ENCODE measurements at regions of chr3 and their contacts with region 1.

Region 1: DNA sequence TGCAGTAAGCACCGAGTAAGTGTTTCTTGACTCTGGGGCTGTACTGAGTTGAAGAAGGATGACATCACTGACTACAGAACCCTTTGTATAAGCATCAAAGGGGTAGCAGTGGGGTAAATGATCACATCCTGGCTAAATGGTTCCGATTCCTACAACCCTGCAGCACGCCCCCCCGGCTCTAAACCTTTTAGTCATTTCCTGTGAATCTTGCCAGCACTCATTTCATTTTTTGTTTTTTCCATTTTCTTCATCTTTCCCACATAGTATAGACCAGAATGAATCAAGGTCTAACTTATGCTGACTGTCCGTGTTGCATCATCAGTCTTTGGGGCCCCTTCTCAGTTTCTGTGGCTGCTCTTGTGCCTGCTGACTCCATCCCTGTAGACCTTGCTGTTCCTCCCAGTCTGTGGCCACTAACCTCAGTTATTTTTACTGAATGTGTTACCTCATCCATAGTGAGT is 383.1 kb upstream of the TPRG1 start:
- DNase-seq: peak; percentile 85
- H3K4me3 Mint-ChIP-seq: no peak overlapping the region
- H3K27ac Mint-ChIP-seq: no peak overlapping the region
- H3K4me1 Mint-ChIP-seq: peaks cover 2% of the 10 kb centered on the region
- H3K27me3 Mint-ChIP-seq: no peaks in the 10 kb centered on the region

Region 2: DNA sequence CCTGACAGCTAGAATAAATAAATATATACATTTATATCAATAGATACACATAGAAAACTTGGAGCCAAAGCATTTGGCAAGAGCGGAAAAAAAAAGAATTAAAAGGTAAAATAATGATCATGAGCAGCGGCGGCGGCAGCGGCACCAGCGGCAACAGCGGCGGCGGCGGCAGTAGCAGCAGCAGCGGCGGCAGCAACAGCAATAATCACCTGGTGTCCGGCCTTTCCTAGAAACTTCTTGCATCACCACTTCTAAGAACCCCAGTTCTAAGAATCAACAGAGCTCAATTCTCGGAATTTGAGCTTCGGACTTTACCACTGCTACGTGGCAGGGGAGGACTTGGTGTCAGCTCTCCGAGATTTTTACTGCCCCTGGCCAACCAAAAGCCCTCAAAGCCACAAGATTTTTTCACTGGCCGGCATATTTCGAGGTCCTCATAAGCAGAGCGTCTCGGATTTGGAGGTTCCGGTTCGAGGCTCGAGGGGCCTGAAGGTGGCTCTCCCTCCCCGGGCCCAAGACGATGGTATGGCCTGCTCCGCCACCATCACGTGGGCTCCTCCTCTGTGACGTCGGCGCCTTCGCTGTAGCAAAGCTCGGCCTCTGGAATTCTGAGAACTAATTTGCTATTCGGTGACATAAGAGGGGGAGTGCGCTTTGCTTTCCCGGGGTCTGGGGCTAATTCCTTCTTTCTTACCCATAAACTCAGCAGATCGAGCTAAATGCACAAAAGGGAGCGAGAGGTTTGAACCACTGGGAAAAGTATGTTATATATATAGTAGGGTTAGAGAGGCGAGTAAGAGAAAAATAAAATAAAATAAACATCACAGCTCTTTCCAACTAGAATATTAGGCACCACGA is 1043.2 kb before region 1 on chr3 and contains the start of gene BCL6:
- intact Hi-C with region 1: loop called (anchors 1 kb)
- DNase-seq: peak; percentile 97
- H3K4me3 Mint-ChIP-seq: peak within 1 kb of the TSS; percentile 98
- H3K27ac Mint-ChIP-seq: peak within 1 kb of the TSS; percentile 99
- H3K4me1 Mint-ChIP-seq: peaks cover 61% of the 10 kb centered on the region
- H3K27me3 Mint-ChIP-seq: no peaks in the 10 kb centered on the region
- total RNA-seq, gene BCL6: 41.7 and 51.7 TPM in 2 replicates

Region 3: GRCh38 chr3:188294823-188295487 is 493.7 kb before region 1 on chr3:
- intact Hi-C with region 1: loop called (anchors 5 kb)
- DNase-seq: no peak
- H3K4me3 Mint-ChIP-seq: no peak overlapping the region
- H3K27ac Mint-ChIP-seq: no peak overlapping the region
- H3K4me1 Mint-ChIP-seq: peaks cover 71% of the 10 kb centered on the region
- H3K27me3 Mint-ChIP-seq: no peaks in the 10 kb centered on the region

Region 4: DNA sequence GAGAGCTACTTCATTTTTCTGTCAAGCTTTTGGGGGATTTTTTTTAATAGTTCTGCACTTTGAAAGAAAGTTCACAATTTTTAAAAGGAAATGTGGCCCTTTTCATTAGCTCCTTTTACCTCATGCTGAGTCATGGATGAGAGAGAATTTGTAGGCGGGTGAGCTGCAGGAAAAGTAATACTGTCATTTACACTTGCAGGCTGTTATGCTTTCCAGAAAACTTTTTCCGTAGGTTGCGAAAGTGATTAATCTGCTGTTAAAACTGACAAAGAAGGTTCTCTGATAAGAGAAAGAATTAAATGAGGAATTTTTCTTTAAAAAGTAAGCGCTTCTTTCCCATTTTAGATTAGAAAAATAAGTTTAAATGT is 204.5 kb before region 1 on chr3:
- intact Hi-C with region 1: loop called (anchors 1 kb)
- DNase-seq: no peak
- H3K4me3 Mint-ChIP-seq: no peak overlapping the region
- H3K27ac Mint-ChIP-seq: no peak overlapping the region
- H3K4me1 Mint-ChIP-seq: peaks cover 14% of the 10 kb centered on the region
- H3K27me3 Mint-ChIP-seq: no peaks in the 10 kb centered on the region

Region 5: GRCh38 chr3:188752850-188753249 is 35.8 kb before region 1 on chr3:
- intact Hi-C with region 1: loop called (anchors 1 kb)
- DNase-seq: no peak
- H3K4me3 Mint-ChIP-seq: no peak overlapping the region
- H3K27ac Mint-ChIP-seq: peak overlapping the region; percentile 2
- H3K4me1 Mint-ChIP-seq: peaks cover 21% of the 10 kb centered on the region
- H3K27me3 Mint-ChIP-seq: peaks cover 2% of the 10 kb centered on the region

Region 6: DNA sequence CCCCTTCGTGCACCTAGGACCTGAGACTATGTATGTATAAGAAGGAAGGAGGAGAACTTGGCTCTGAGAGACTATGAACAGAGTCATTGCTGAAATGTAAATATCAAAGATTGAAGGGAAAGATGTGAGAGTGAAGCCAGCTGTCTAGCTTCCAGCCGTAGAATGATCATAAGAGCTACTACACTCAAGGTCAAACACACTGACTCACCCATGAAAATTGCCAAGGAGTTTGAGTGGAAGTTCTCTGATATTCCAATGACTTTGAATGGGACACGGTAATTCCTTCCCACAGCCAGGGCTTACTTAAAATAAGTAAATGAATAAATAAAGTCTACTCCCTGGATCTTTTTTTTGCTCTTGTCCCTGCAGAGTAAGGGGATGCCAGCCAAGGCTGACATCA is 15.8 kb before region 1 on chr3:
- intact Hi-C with region 1: no loop called
- DNase-seq: no peak
- H3K4me3 Mint-ChIP-seq: no peak overlapping the region
- H3K27ac Mint-ChIP-seq: no peak overlapping the region
- H3K4me1 Mint-ChIP-seq: no peaks in the 10 kb centered on the region
- H3K27me3 Mint-ChIP-seq: peaks cover under 1% of the 10 kb centered on the region

Region 7: DNA sequence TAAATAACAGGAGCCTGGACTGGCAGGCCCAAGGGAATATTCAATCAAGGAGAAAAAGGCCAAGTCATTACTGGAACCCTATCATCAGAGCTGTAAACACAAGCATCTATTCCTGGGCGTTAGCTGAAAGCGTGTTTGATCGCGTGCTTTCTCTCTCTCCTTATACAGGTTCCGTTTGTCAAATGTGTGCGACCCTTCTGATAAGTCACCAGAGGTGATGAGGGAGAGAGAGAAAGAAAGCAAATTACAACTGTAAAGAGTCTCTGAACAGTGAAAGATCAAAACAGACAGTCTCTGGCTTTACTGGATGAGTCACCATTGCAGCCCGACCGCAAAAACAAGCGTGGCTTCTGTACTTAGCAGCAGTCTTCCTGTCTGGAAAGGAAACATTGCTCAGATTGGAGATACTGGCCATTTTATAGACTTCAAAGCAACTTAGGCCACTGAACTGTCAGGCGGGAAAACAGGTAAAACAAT is 343.6 kb after region 1 on chr3:
- intact Hi-C with region 1: loop called (anchors 1 kb)
- DNase-seq: peak; percentile 93
- H3K4me3 Mint-ChIP-seq: peak overlapping the region; percentile 70
- H3K27ac Mint-ChIP-seq: peak overlapping the region; percentile 91
- H3K4me1 Mint-ChIP-seq: peaks cover 25% of the 10 kb centered on the region
- H3K27me3 Mint-ChIP-seq: no peaks in the 10 kb centered on the region